Esophagus muscularis mucosa (tissue), 4 donors: ENCODE measurements at regions of chr5 and their contacts with region 1.

Region 1: GRCh38 chr5:125484742-125485641 is 738.6 kb upstream of the ZNF608 start:
- DNase-seq: no peak
- H3K4me3 ChIP-seq: peak overlapping the region in 3 of 4 donors; percentile 22 to 45 (median 25)
- H3K27ac ChIP-seq: peak overlapping the region; percentile 83 to 87 (median 86)
- H3K4me1 ChIP-seq: peaks cover 16 to 49% (median 41%) of the 10 kb centered on the region in 4 donors
- H3K27me3 ChIP-seq: no peaks in the 10 kb centered on the region
- CTCF ChIP-seq: no peak
- EP300 ChIP-seq: peak; percentile 18
- POLR2A ChIP-seq: no peak

Region 2: DNA sequence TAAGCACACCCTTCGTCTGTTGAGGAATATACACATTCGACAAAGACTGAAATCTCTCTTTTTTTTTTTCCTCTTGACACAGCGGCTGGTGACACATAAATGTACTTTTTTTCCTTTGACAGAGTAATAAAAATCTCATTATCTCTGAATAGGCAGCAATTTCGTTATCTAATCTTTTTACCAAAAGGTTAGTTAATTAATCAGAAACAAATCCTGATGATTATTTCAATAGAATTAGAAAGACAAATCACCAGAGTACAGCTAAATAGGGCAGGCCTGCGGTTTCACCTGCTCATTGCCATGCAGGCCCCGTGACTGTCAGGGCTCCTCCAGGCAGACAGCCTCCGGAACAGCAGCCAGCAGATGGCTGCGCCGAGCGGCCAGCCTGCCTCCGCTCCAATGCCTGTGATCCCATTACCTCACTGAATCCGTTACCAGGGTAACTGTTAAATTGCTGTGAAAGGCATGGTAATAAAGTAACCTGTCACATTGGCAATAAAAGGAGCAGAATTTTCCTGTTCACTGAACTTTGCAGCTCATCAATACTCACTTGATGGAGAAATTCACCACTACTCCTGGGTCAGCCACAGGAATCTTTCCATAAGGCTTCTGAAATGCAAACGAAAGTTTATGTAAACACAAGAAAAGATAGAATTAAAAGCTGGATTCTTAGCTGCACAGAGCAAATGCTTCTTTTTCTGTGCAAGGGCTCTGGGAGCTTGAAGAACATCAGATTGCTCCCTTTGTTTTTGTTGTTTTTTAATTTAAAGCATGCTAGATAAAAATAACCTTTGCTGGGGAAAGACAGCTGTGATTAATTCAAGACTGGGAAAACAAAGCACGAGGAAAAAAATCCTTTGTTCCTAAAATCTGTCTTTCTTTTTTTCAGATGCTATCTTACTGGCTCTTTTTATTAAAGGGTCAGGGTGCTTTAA is 72.2 kb before region 1 on chr5:
- intact Hi-C with region 1: loop called (anchors 2 kb)
- DNase-seq: no peak
- H3K4me3 ChIP-seq: peak overlapping the region in 3 of 4 donors; percentile 13 to 32 (median 22)
- H3K27ac ChIP-seq: peak overlapping the region; percentile 69 to 76 (median 74)
- H3K4me1 ChIP-seq: peaks cover 21 to 68% (median 64%) of the 10 kb centered on the region in 4 donors
- H3K27me3 ChIP-seq: no peaks in the 10 kb centered on the region
- CTCF ChIP-seq: peak; percentile 26 to 50 (median 35)
- EP300 ChIP-seq: no peak
- POLR2A ChIP-seq: no peak

Region 3: DNA sequence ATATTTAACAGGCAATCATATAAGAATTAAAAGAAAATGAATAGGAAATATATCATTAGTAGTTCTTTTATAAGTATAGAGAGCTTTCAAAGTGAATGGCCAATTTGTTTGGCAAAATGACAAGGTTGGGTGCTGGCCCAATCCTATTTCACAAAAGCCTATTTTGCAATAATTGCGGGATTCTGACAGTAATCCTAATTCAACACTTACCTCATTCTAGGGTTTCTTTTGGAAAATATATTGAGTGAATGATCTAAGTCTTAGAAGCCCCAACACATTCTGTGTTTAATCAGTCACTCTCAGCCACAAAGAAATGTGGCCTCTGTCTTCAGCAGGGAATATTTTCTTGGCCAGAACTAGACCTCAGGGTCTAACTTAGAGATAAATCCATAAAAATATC is 97.4 kb after region 1 on chr5:
- intact Hi-C with region 1: loop called (anchors 10 kb)
- DNase-seq: no peak
- H3K4me3 ChIP-seq: no peak overlapping the region
- H3K27ac ChIP-seq: peak overlapping the region; percentile 58 to 71 (median 61)
- H3K4me1 ChIP-seq: peaks cover 12 to 45% (median 39%) of the 10 kb centered on the region in 4 donors
- H3K27me3 ChIP-seq: no peaks in the 10 kb centered on the region
- CTCF ChIP-seq: no peak
- EP300 ChIP-seq: no peak
- POLR2A ChIP-seq: no peak